ENCODE measurements at regions of chr2 and their contacts with region 1.

Region 1: GRCh38 chr2:201952187-201952586 is 81.5 kb upstream of the FZD7 start:
- DNase-seq: no peak
- H3K4me3 ChIP-seq: no peak overlapping the region
- H3K27ac ChIP-seq: no peak overlapping the region
- H3K4me1 ChIP-seq: no peaks in the 10 kb centered on the region
- CTCF ChIP-seq: no peak

Region 2: GRCh38 chr2:201931951-201932350 is 20.2 kb before region 1 on chr2:
- CTCF ChIA-PET with region 1: no interaction called
- POLR2A ChIA-PET with region 1: interaction called, 4 read pairs
- intact Hi-C with region 1: loop called (anchors 2 kb)
- DNase-seq: no peak
- H3K4me3 ChIP-seq: no peak overlapping the region
- H3K27ac ChIP-seq: no peak overlapping the region
- H3K4me1 ChIP-seq: no peaks in the 10 kb centered on the region
- CTCF ChIP-seq: no peak

Measured in OCI-LY7 (cell line).